ENCODE measurements at regions of chr20 and their contacts with region 1.

Region 1: GRCh38 chr20:50267041-50267865 is 76.6 kb downstream of the CEBPB start:
- DNase-seq: peak in 1 of 2 donors; percentile 63
- ATAC-seq: peak in 1 of 2 donors; percentile 5
- H3K4me3 ChIP-seq: no peak overlapping the region
- H3K27ac ChIP-seq: peak overlapping the region in 3 of 4 donors; percentile 5 to 35 (median 30)
- H3K4me1 ChIP-seq: no peaks in the 10 kb centered on the region
- H3K27me3 ChIP-seq: no peaks in the 10 kb centered on the region
- CTCF ChIP-seq: no peak
- POLR2A ChIP-seq: peak in 1 of 2 donors; percentile 27

Region 2: DNA sequence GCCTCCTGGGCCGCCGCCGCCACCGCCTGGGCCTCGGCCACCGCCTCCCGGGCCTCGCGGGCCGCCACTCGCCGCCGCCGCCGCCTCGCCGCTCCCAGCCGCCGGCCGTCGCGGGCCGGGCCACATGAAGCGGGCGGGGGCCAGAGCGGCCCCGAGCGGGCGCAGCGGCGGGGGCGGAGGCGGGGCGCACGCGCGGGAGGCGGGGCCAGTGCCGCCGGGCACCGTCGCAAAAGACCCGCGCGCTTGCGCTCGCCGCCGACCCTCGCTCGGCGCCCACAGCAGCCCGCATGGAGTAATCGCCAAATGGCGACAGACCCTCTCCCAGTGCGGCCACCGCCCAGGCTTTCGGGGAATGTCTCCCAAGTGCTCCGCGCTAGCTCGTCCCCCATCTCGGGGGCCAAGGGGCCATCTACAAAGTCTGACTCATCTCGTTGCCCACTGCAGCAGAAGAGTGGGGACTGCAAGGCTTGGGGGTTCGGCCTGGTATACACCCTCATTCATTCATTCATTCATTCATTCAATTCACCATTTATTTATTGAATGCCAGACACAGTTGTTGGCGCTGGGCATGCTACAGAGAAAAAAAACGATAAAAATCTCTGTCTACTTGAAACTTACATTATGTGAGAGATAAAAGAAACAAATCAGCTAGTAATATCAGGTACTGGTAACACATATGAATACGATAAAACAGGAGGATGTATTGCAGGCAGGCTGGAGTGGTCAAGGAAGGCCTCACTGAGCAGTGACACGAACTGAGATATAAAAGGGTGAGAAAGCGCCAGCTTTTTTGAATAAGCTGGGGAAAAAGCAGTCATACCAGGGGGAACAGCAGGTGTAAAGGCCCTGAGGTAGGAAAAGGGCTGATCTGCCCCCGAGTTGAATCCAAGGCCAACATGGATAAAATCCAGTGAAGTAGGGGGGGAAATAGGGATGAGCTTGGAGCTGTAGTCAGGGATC is 553.2 kb before region 1 on chr20 and contains the start of gene B4GALT5:
- in situ Hi-C with region 1: no loop called
- intact Hi-C with region 1: no loop called
- DNase-seq: peak; percentile 27 to 56
- ATAC-seq: peak; percentile 67 to 72
- H3K4me3 ChIP-seq: peak within 1 kb of the TSS; percentile 89 to 98 (median 92)
- H3K27ac ChIP-seq: peak within 1 kb of the TSS; percentile 95 to 99 (median 98)
- H3K4me1 ChIP-seq: peaks cover 44 to 59% of the 10 kb centered on the region in 2 donors
- H3K27me3 ChIP-seq: no peaks in the 10 kb centered on the region
- CTCF ChIP-seq: no peak
- POLR2A ChIP-seq: peak; percentile 69 to 78
- total RNA-seq, gene B4GALT5: 27.6 to 75.2 (median 56.4) TPM

Region 3: GRCh38 chr20:50200482-50201104 is 66.7 kb before region 1 on chr20:
- in situ Hi-C with region 1: loop called in 2 of 4 experiments (anchors 10 kb)
- intact Hi-C with region 1: no loop called
- DNase-seq: peak; percentile 63 to 94
- ATAC-seq: peak; percentile 54 to 83
- H3K4me3 ChIP-seq: no peak overlapping the region
- H3K27ac ChIP-seq: peak overlapping the region; percentile 68 to 79 (median 76)
- H3K4me1 ChIP-seq: peaks cover 10 to 13% of the 10 kb centered on the region in 2 donors
- H3K27me3 ChIP-seq: no peaks in the 10 kb centered on the region
- CTCF ChIP-seq: no peak
- POLR2A ChIP-seq: no peak